ENCODE measurements at regions of chr18 and their contacts with region 1.

Region 1: GRCh38 chr18:12308386-12309100 is 502 bp downstream of the TUBB6 start:
- DNase-seq: peak; percentile 29 to 95
- H3K4me3 ChIP-seq: peak overlapping the region; percentile 72 to 95
- H3K27ac ChIP-seq: peak overlapping the region; percentile 97 to 98
- H3K4me1 ChIP-seq: peaks cover 15 to 20% of the 10 kb centered on the region in 2 donors
- H3K27me3 ChIP-seq: no peaks in the 10 kb centered on the region
- CTCF ChIP-seq: no peak

Region 2: GRCh38 chr18:12246849-12247808 is 61.4 kb before region 1 on chr18:
- intact Hi-C with region 1: no loop called
- DNase-seq: no peak
- H3K4me3 ChIP-seq: no peak overlapping the region
- H3K27ac ChIP-seq: no peak overlapping the region
- H3K4me1 ChIP-seq: no peaks in the 10 kb centered on the region
- H3K27me3 ChIP-seq: no peaks in the 10 kb centered on the region
- CTCF ChIP-seq: peak in 1 of 3 experiments; percentile 6

Region 3: GRCh38 chr18:12271376-12272235 is 36.9 kb before region 1 on chr18:
- intact Hi-C with region 1: loop called (anchors 1 kb)
- DNase-seq: peak in 1 of 2 donors; percentile 86
- H3K4me3 ChIP-seq: peak overlapping the region; percentile 56 to 65
- H3K27ac ChIP-seq: peak overlapping the region; percentile 67 to 68
- H3K4me1 ChIP-seq: peaks cover 0 to 6% of the 10 kb centered on the region in 2 donors
- H3K27me3 ChIP-seq: no peaks in the 10 kb centered on the region
- CTCF ChIP-seq: peak; percentile 70 to 77 (median 75)

Region 4: DNA sequence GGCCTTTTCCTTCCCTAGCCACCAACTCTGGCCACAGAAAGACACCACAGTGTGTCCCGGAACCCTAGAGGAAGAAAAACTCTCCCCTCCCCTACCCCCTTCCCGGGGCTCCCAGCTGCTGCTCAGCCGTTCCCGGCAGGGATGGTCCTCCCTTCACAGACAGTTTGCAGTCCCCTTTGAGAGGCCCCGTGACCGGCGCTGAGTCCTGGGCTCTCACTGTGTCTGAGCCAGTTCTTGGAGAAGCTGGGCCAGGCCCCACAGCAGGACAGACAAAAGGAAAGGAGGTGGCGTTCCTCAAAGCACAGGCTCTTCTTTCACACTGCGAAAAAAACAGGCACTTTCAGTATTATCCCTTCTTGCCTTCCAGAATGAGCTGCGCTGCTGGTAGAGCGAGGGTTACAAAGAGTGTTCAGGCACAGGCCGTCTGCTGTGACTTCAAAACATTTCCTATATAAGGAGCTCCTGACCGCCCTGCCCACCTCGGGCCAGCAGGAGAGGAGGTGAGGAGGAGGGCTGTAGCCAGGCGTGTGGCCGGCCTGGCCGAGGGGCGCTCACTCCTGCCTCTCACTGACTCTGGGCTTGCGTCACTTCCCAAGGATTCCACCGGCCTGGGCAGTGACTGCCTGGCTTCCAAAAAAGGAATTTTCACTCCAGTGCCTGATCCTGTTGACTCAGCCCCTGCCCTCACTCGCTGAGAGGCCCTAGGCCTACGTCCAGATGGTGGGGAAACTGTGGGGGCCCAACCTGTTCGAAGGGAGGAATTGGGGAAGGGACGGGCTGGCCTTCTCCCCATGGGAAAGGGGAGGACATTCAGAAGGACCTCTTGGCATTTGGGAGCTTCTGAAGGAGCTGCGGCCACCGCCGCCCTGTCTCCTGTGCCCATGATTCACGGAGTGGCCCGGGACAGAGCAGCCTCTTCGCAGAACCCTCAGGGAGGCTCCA is 29.5 kb before region 1 on chr18:
- intact Hi-C with region 1: loop called (anchors 2 kb)
- DNase-seq: peak; percentile 73 to 97
- H3K4me3 ChIP-seq: peak overlapping the region; percentile 38 to 66
- H3K27ac ChIP-seq: peak overlapping the region; percentile 95 to 99
- H3K4me1 ChIP-seq: peaks cover 3 to 21% of the 10 kb centered on the region in 2 donors
- H3K27me3 ChIP-seq: no peaks in the 10 kb centered on the region
- CTCF ChIP-seq: peak in 2 of 3 experiments; percentile 12 to 31

Region 5: GRCh38 chr18:12287684-12288402 is 20.7 kb before region 1 on chr18:
- intact Hi-C with region 1: loop called (anchors 1 kb)
- DNase-seq: peak; percentile 41 to 94
- H3K4me3 ChIP-seq: peak overlapping the region; percentile 41 to 65
- H3K27ac ChIP-seq: peak overlapping the region; percentile 85 to 86
- H3K4me1 ChIP-seq: peaks cover 5 to 7% of the 10 kb centered on the region in 2 donors
- H3K27me3 ChIP-seq: no peaks in the 10 kb centered on the region
- CTCF ChIP-seq: no peak